ENCODE measurements at regions of chr13 and their contacts with region 1.

Region 1: DNA sequence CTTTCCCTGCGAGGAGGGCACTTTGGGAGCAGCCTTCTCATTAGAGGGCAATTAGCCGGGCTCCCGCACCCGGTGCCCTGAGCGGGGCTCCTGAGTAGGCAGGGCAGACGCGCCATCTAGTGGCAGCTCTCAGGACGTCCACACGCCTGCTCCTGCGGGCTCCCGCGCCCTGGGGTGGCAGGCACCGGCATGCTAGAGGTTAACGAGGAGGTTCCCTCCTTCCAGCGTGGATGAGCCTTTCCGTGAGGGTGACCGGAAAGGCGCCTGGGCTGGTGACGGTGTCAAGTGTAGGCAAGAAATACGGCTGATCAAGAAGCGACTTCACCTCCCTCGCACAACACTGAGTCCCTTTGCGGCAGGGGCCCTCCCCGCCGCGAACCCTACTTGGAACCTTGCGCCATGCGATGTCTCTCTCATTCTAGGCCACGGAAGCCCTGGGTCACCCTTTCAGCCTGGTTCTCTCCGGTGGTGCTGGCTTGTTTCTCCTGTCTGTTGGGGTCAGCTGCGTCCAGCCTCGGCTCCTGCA is 67.7 kb downstream of the ALOX5AP start:
- DNase-seq: peak; percentile 73
- ATAC-seq: peak; percentile 98
- H3K4me3 Mint-ChIP-seq: peak overlapping the region; percentile 73
- H3K27ac Mint-ChIP-seq: no peak overlapping the region
- H3K4me1 Mint-ChIP-seq: peaks cover 11% of the 10 kb centered on the region
- H3K27me3 Mint-ChIP-seq: no peaks in the 10 kb centered on the region
- CTCF ChIP-seq: peak; percentile 90

Region 2: DNA sequence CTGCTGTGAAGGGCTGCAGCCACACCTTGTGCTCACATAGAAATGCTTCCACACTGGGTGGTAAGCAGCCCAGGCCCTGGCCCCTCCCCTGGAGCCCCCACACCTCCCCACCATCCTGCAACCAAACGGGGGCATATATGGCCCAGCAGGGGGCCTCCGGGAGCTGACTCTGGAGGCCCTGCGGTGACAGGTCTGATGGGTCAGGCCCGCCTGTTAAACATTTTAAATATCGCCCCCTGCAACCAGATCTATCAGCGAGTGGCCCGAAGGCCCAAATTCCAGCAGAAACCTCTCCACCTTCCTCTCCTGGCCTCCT is 447.7 kb before region 1 on chr13:
- CTCF ChIA-PET with region 1: interaction called, 4 read pairs
- POLR2A ChIA-PET with region 1: no interaction called
- intact Hi-C with region 1: loop called (anchors 1 kb)
- DNase-seq: peak; percentile 61
- ATAC-seq: peak; percentile 100
- H3K4me3 Mint-ChIP-seq: peak overlapping the region; percentile 45
- H3K27ac Mint-ChIP-seq: peak overlapping the region; percentile 77
- H3K4me1 Mint-ChIP-seq: peaks cover 32% of the 10 kb centered on the region
- H3K27me3 Mint-ChIP-seq: no peaks in the 10 kb centered on the region
- CTCF ChIP-seq: no peak

Region 3: DNA sequence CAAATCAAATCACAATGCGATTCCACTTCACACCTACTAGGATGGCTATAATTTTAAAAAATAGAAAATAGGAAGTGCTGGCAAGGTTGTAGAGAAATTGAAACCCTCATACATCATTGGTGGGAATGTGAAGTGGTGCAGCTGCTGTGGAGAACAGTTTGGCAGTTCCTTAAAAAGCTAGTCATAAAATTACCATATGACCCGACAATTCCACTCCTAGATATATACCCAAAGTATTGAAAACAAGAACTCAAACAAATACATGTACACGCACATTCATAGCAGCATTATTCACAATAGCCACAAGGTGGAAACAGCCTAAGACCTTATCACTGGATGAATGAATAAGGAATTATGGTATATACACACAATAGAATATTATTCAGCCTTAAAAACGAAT is 349.3 kb before region 1 on chr13:
- CTCF ChIA-PET with region 1: no interaction called
- POLR2A ChIA-PET with region 1: no interaction called
- intact Hi-C with region 1: no loop called
- DNase-seq: no peak
- ATAC-seq: peak; percentile 54
- H3K4me3 Mint-ChIP-seq: no peak overlapping the region
- H3K27ac Mint-ChIP-seq: peak overlapping the region; percentile 46
- H3K4me1 Mint-ChIP-seq: peaks cover 39% of the 10 kb centered on the region
- H3K27me3 Mint-ChIP-seq: no peaks in the 10 kb centered on the region
- CTCF ChIP-seq: no peak

Region 4: DNA sequence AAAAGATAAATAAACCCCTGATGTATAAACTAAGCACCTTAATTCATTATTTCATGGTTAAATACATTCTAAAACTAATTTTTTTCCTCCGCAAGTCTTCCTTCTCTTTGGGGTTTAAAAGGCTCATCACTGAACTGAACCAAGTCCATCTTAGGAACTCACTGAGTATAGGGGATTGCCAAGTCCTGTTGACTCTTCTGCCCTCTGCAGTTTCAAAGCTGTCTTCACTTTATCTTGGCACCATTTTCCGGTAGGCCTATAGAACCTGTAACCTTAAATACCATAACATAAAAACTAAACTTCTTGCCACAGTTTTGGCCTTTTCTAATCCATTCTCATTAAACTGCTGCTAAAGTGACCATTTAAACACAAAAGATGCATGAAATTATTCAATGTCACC is 251.8 kb before region 1 on chr13:
- CTCF ChIA-PET with region 1: no interaction called
- POLR2A ChIA-PET with region 1: no interaction called
- intact Hi-C with region 1: loop called (anchors 2 kb)
- DNase-seq: no peak
- ATAC-seq: peak; percentile 85
- H3K4me3 Mint-ChIP-seq: no peak overlapping the region
- H3K27ac Mint-ChIP-seq: no peak overlapping the region
- H3K4me1 Mint-ChIP-seq: peaks cover 11% of the 10 kb centered on the region
- H3K27me3 Mint-ChIP-seq: no peaks in the 10 kb centered on the region
- CTCF ChIP-seq: no peak

Region 5: DNA sequence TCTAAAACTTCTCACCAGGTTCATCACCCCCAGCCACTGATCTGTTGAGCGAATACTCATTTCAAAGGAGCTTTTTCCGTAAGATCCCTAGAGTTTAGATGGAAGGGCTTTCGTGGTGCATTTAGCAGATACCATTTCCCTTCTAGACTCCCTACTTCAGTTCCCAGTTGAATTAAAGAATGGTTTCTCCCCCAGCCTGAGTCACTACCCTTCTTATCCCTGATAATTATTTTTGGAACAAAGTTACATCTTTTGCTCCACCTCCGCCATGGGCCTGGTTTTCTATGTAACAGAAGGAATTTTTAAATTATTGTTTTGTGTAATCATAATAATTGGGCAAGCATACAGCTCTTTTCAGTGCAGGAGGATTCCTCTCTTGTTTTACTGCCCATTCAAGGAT is 163.3 kb before region 1 on chr13:
- CTCF ChIA-PET with region 1: no interaction called
- POLR2A ChIA-PET with region 1: no interaction called
- intact Hi-C with region 1: loop called (anchors 10 kb)
- DNase-seq: no peak
- ATAC-seq: no peak
- H3K4me3 Mint-ChIP-seq: no peak overlapping the region
- H3K27ac Mint-ChIP-seq: no peak overlapping the region
- H3K4me1 Mint-ChIP-seq: peaks cover 30% of the 10 kb centered on the region
- H3K27me3 Mint-ChIP-seq: no peaks in the 10 kb centered on the region
- CTCF ChIP-seq: no peak

Region 6: DNA sequence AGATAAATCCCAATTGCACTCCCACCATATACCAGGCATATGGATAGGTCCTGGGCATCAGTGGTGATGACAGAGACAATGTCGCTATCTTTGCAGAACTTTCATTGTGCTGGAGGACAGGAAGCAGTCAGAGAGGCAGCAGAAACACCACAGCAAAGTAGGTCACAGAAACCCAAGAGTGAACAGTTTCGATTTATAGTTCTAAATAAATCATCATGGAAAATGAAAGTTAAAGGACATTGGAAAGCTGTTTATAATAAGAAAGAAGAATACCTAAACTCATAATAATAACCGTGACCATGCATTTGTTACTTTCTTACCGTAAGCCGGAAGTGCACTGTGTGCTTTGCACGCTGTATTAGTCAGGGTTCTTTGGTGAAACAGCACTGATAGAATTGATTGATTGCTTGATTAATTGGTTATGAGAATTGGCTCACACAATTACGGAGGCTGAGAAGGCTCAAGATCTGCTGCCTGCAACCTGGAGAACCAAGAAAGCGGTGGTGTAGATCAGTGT is 28.7 kb before region 1 on chr13:
- CTCF ChIA-PET with region 1: no interaction called
- POLR2A ChIA-PET with region 1: no interaction called
- intact Hi-C with region 1: no loop called
- DNase-seq: no peak
- ATAC-seq: no peak
- H3K4me3 Mint-ChIP-seq: no peak overlapping the region
- H3K27ac Mint-ChIP-seq: no peak overlapping the region
- H3K4me1 Mint-ChIP-seq: peaks cover 9% of the 10 kb centered on the region
- H3K27me3 Mint-ChIP-seq: no peaks in the 10 kb centered on the region
- CTCF ChIP-seq: no peak

Region 7: DNA sequence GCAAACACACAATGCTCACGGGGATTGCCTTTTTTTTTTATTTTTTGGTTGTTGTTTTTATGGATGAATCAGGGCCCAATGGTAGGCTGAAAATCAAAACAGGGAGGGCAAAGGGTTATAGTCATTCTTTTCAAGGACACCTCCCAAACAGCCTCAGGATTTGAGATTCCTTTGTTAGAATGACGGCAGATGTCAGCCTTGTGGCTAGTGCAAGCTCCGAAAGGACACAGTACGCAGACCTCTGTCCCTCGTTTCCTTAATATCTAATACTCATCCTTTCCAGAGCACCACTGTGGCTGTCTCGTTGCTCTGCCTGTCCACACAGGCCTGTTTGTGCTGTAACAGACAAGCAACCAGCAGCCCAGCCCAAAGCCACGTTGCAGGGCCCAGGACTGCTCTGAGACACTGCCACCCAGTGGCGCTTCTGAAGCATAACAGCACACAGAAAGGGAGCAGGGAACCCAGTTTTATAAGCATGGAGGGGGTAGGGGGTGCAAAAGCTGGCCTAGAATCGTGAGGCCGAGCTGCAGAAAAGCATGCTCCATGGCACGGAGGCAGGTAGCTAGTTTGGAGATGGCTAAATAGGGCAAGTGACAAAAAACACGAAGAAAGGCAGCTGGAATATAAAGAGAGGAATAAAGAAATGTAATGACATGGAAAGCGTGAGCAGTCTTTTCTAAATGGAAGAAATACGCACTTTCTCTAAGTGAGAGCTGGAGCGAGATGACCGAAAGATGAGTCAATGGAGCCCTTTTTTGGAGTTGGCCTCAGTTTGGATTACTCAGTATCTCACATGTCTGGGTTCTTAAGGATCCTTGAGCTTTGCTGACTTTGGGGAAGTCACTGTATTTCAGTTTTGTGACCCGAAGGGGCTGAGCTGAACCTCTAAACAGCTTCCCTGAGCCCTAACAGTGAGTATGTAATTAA is 62.4 kb after region 1 on chr13:
- CTCF ChIA-PET with region 1: no interaction called
- POLR2A ChIA-PET with region 1: no interaction called
- intact Hi-C with region 1: loop called (anchors 2 kb)
- DNase-seq: peak; percentile 29
- ATAC-seq: peak; percentile 96
- H3K4me3 Mint-ChIP-seq: no peak overlapping the region
- H3K27ac Mint-ChIP-seq: no peak overlapping the region
- H3K4me1 Mint-ChIP-seq: peaks cover 1% of the 10 kb centered on the region
- H3K27me3 Mint-ChIP-seq: peaks cover 13% of the 10 kb centered on the region
- CTCF ChIP-seq: peak; percentile 66

Region 8: DNA sequence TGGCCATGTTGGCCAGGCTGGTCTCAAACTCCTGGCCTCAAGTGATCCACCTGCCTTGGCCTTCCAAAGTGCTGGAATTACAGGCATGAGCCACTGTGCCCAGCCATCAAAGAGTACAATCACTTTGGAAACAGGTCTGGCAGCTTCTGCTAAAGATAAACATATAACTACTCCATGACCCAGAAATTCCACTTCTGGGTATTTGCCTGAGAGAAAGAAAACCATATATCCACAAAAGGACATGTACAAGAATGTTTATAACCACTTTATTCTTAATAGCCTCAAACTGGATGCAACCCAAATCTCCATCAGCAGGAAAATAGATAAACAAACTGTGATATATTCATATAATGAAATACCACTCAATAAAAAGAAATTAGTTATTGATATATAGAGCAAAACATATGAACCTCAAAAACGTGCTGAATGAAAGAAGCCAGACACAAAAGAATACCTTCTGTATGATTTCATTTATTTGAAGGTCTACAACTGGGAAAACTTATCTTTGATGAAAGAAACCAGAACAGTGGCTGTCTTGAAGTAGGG is 169.9 kb after region 1 on chr13:
- CTCF ChIA-PET with region 1: no interaction called
- POLR2A ChIA-PET with region 1: no interaction called
- intact Hi-C with region 1: no loop called
- DNase-seq: no peak
- ATAC-seq: no peak
- H3K4me3 Mint-ChIP-seq: no peak overlapping the region
- H3K27ac Mint-ChIP-seq: no peak overlapping the region
- H3K4me1 Mint-ChIP-seq: no peaks in the 10 kb centered on the region
- H3K27me3 Mint-ChIP-seq: peaks cover 11% of the 10 kb centered on the region
- CTCF ChIP-seq: no peak

Region 9: GRCh38 chr13:31485651-31486051 is 682.6 kb after region 1 on chr13:
- CTCF ChIA-PET with region 1: no interaction called
- POLR2A ChIA-PET with region 1: no interaction called
- intact Hi-C with region 1: no loop called
- DNase-seq: no peak
- ATAC-seq: no peak
- H3K4me3 Mint-ChIP-seq: no peak overlapping the region
- H3K27ac Mint-ChIP-seq: no peak overlapping the region
- H3K4me1 Mint-ChIP-seq: no peaks in the 10 kb centered on the region
- H3K27me3 Mint-ChIP-seq: no peaks in the 10 kb centered on the region
- CTCF ChIP-seq: no peak

Measured in activated B cell treated with CpG ODN at 0.5 μM for 24 hours (primary cell).